ENCODE measurements at regions of chr17 and their contacts with region 1.

Region 1: GRCh38 chr17:42388381-42389134 is at the start of gene STAT3:
- DNase-seq: peak; percentile 100
- total RNA-seq, gene STAT3: 159 TPM

Region 2: DNA sequence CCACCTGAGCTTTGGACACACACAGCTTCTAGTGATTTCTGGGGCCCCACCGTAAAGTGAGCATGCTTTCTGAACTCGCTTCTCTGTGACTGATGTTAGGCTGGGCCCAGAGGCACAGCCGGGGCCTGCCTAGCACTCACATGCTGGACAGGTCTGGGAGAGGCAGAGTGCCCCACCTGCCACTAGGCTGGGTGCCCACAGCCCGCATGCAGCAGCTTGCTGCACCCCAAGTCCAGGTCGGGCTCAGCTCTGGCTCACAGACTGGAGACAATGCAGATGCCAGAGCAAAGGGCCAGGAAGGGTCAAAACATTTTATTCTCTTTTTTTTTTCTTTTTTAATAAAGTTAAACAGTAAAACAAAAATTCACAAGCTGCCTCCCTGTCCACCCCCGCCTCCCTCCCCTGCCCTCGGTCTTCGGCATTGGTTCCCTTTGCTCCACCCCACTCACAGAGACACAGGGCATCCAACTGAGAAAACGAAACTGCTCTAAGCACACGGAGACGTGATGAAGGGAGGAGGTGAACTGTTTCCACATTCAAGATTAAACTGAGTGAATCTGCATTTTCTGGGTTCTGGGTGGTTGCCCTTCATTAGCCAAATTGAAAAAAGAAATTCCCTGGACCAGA is 412.3 kb before region 1 on chr17:
- intact Hi-C with region 1: no loop called
- DNase-seq: no peak

Region 3: DNA sequence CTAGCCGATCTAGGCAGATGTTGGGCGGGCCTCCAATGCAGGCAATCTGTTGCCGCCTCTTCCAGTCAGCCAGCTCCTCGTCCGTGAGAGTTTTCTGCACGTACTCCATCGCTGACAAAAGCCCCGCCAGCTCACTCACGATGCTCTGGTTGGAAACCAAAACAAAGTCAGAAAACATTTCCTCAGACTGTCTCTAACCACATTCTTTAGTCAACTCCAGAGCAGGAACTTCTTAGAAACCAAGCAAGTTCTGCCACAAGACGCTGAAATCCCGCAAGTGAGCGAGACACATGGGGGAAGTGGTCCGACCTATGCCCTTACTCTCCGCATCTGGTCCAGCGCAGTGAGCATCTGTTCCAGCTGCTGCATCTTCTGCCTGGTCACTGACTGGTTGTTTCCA is 51.1 kb before region 1 on chr17:
- intact Hi-C with region 1: no loop called
- DNase-seq: no peak

Region 4: GRCh38 chr17:42422958-42423712 is 34.6 kb after region 1 on chr17 and contains the start of gene CAVIN1:
- intact Hi-C with region 1: loop called (anchors 2 kb)
- DNase-seq: peak; percentile 99
- total RNA-seq, gene CAVIN1: 358 TPM

Region 5: GRCh38 chr17:42459256-42459800 is 70.8 kb after region 1 on chr17:
- intact Hi-C with region 1: no loop called
- DNase-seq: peak; percentile 77

Region 6: DNA sequence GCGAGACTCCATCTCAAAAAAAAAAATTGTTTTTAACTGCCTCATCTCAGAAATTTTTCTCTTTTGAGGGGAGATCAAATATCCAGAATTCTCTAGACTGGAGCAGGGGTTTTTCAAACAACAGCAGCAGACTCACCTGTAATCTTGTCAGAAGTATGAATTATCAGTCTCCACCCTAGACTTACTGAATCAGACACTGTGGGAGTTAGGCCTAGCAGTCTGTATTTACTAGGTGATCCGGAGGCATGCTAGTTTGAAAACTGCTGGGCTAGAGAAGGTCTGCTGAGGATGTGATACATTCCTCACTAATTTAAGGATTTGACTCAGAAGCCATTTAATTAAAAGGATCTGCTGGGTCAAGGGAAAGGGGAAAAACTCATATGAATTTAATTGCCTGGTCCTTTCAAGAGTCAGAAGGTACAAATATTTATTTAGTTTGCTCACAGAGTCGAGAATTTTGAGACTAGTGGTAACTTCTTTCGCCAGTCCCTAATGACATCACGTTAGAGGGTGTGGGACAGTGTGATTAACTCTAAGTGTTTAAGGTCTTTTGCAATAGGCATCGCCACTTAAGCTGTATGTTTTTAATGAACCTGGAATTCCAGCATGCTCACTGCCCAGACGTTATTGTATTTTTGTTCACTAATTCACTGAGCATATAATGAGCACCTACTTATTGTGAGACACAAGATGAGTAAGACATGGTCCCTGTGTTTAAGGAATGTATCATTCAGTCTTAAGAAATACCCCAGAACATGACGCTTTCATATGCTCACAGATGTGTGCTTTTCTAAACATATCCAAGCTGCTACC is 84.4 kb after region 1 on chr17:
- intact Hi-C with region 1: no loop called
- DNase-seq: no peak